ENCODE measurements at regions of chr7 and their contacts with region 1.

Region 1: GRCh38 chr7:140673063-140673773 is 473 bp downstream of the ADCK2 start:
- DNase-seq: peak; percentile 40 to 87 (median 68)

Region 2: GRCh38 chr7:140696680-140697446 is 23.6 kb after region 1 on chr7 and contains the start of gene NDUFB2:
- intact Hi-C with region 1: loop called (anchors 2 kb)
- DNase-seq: peak in 41 of 42 donors; percentile 72 to 93 (median 86)

Region 3: DNA sequence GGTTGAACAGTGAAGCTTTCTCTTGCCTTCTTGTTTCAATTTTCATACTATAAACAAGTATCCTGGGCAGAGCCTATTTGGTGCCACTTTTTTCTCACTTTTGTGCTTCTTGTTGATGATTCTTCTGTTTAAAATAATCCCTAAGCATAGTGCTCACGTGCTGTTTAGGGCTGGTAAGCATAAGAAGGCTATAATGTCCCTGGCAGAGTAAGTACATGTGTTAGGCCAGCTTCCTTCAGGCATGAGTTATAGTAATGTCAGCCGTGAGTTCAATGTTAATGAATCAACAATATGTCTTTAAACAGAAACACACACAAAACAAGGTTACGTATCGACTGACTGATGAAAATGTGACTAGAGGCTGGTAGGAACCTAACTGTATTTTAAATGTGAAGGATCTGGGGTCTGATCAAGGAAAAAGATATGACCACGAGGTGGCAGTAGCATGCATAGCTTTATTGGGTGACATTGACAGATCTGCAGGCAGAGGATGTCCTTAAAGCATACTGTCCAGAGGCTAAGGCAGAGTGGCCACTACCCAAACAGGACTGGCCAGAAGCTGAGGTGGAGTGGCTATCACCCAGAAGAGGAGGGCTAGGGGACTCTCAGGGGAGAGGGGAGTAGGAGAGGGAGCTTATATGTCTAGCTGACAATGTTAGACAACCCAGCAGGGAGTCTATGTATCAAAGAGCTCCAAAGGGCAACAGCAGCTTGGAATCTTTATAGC is 137.8 kb after region 1 on chr7:
- intact Hi-C with region 1: loop called (anchors 10 kb)
- DNase-seq: peak in 36 of 42 donors; percentile 6 to 88 (median 59)

Region 4: GRCh38 chr7:140924019-140924820 is 251.0 kb after region 1 on chr7:
- intact Hi-C with region 1: loop called (anchors 10 kb)
- DNase-seq: peak; percentile 53 to 89 (median 79)

Region 5: DNA sequence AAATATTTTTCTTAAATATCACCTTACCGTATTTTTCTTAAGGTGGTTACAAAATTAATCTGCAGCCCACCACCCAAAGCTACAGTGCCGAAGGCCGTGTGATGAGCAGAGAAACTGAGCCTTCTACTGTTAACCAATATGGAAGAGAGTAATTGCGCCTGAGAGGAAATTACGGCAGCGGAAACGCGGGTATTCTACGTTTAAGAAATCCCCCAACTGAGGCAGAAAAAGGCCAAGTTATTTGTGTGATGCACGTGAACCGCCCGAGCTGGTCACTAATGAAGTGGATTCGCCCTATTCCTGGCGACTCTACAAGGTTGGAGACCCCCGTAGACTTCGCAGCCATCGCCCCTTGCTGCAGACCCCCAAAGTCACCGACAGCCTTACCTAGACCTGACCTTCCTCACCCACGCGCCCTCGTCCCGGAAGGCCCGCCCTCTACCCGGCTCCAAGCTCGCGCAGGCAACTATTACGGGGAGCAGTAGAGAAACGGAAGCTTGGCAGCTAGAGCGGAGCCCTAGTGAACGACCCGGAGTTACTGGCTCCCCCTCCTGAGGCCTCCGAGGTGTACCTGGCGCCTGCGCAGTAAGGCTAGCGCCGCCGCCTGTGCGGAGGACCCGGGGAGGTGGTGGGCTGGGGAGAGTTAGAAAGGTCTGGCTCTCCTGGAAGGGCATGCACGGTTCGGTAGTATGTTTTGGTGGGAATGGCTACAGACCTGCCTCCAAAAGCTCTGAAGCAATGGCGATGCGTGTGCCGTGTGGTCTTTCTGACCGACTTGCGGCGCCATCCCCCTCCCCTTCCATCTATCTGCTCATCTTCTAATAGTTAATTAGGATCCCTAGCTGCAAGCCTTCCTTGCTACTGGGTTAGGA is 341.5 kb after region 1 on chr7 and contains the start of gene MRPS33:
- intact Hi-C with region 1: loop called (anchors 10 kb)
- DNase-seq: peak; percentile 94 to 99 (median 98)